Head of caudate nucleus (tissue), 42 donors: ENCODE measurements at regions of chr1 and their contacts with region 1.

Region 1: GRCh38 chr1:174022080-174022975 is at the start of gene RC3H1:
- DNase-seq: peak; percentile 78 to 98 (median 94)

Region 2: GRCh38 chr1:173867753-173868265 is 154.5 kb before region 1 on chr1 and contains the start of gene GAS5:
- intact Hi-C with region 1: loop called (anchors 5 kb)
- DNase-seq: peak; percentile 92 to 100 (median 98)

Region 3: DNA sequence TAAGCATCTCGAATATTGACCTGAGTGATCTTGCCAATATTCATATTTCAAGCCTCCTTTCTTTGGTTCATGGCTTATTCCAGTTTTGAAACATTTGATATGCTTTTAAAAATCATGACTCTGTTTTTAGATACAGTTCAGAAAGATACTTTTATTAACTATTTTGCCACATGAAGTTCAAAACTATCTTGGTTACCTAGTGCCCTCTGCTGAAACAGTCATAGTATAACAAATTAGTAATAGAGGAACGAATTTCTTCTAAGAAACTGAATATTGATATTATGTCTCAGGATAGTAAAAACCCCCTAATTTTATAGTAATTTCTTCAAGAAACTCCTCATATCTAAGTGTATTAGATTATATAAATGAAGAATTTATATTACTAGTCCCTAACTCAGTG is 52.4 kb after region 1 on chr1:
- intact Hi-C with region 1: loop called (anchors 10 kb)
- DNase-seq: peak in 1 of 42 donors; percentile 15